CD4-positive, alpha-beta memory T cell (primary cell): ENCODE measurements at regions of chr2 and their contacts with region 1.

Region 1: DNA sequence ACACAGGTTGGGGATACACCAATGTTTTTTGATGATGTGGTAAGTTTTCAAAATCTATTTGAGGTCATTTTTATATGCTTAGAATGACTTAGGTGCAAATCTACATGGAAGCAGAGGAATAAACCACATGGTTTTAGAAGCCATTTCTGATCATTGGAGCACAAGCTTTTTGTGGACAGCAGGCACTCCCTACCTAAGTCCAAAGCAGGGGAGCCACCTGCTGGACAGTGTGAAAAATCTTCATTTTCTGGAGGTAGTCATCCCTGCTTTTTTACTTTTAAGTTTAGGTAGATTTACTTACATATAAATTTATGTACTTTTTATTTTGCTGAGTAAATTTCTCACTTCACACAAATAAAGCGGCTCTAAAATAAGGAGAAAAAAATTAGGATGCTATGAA is 323.2 kb downstream of the PLCL1 start:
- DNase-seq: peak in 4 of 5 donors; percentile 37 to 49 (median 42)
- H3K4me3 ChIP-seq: no peak overlapping the region
- H3K4me3 Mint-ChIP-seq: no peak overlapping the region
- H3K27ac ChIP-seq: no peak overlapping the region
- H3K27ac Mint-ChIP-seq: no peak overlapping the region
- H3K4me1 ChIP-seq: no peaks in the 10 kb centered on the region
- H3K4me1 Mint-ChIP-seq: peaks cover 0 to 1% (median under 1%) of the 10 kb centered on the region in 4 donors
- H3K27me3 ChIP-seq: no peaks in the 10 kb centered on the region
- H3K27me3 Mint-ChIP-seq: peaks cover 0 to 1% of the 10 kb centered on the region in 2 donors

Region 2: GRCh38 chr2:197799068-197799467 is 328.6 kb before region 1 on chr2:
- CTCF ChIA-PET with region 1: interaction called, 29 read pairs
- POLR2A ChIA-PET with region 1: interaction called, 3 read pairs
- intact Hi-C with region 1: loop called (anchors 1 kb)
- DNase-seq: no peak
- H3K4me3 ChIP-seq: no peak overlapping the region
- H3K4me3 Mint-ChIP-seq: no peak overlapping the region
- H3K27ac ChIP-seq: no peak overlapping the region
- H3K27ac Mint-ChIP-seq: no peak overlapping the region
- H3K4me1 ChIP-seq: peaks cover 10% of the 10 kb centered on the region
- H3K4me1 Mint-ChIP-seq: peaks cover 5 to 11% (median 9%) of the 10 kb centered on the region in 4 donors
- H3K27me3 ChIP-seq: no peaks in the 10 kb centered on the region
- H3K27me3 Mint-ChIP-seq: peaks cover 1 to 9% of the 10 kb centered on the region in 2 donors

Region 3: GRCh38 chr2:197975931-197976519 is 151.6 kb before region 1 on chr2:
- CTCF ChIA-PET with region 1: no interaction called
- POLR2A ChIA-PET with region 1: no interaction called
- intact Hi-C with region 1: no loop called
- DNase-seq: no peak
- H3K4me3 ChIP-seq: no peak overlapping the region
- H3K4me3 Mint-ChIP-seq: no peak overlapping the region
- H3K27ac ChIP-seq: no peak overlapping the region
- H3K27ac Mint-ChIP-seq: no peak overlapping the region
- H3K4me1 ChIP-seq: no peaks in the 10 kb centered on the region
- H3K4me1 Mint-ChIP-seq: peaks cover 0 to 11% (median 9%) of the 10 kb centered on the region in 4 donors
- H3K27me3 ChIP-seq: no peaks in the 10 kb centered on the region
- H3K27me3 Mint-ChIP-seq: no peaks in the 10 kb centered on the region

Region 4: GRCh38 chr2:198004921-198005829 is 122.5 kb before region 1 on chr2:
- CTCF ChIA-PET with region 1: no interaction called
- POLR2A ChIA-PET with region 1: no interaction called
- intact Hi-C with region 1: loop called (anchors 5 kb)
- DNase-seq: peak; percentile 12 to 55 (median 31)
- H3K4me3 ChIP-seq: no peak overlapping the region
- H3K4me3 Mint-ChIP-seq: peak overlapping the region; percentile 70 to 86 (median 80)
- H3K27ac ChIP-seq: peak overlapping the region; percentile 30
- H3K27ac Mint-ChIP-seq: peak overlapping the region; percentile 71 to 93 (median 90)
- H3K4me1 ChIP-seq: peaks cover 36% of the 10 kb centered on the region
- H3K4me1 Mint-ChIP-seq: peaks cover 30 to 50% (median 44%) of the 10 kb centered on the region in 4 donors
- H3K27me3 ChIP-seq: no peaks in the 10 kb centered on the region
- H3K27me3 Mint-ChIP-seq: no peaks in the 10 kb centered on the region

Region 5: GRCh38 chr2:198116756-198117155 is 10.9 kb before region 1 on chr2:
- CTCF ChIA-PET with region 1: interaction called, 15 read pairs
- POLR2A ChIA-PET with region 1: no interaction called
- intact Hi-C with region 1: no loop called
- DNase-seq: no peak
- H3K4me3 ChIP-seq: no peak overlapping the region
- H3K4me3 Mint-ChIP-seq: no peak overlapping the region
- H3K27ac ChIP-seq: no peak overlapping the region
- H3K27ac Mint-ChIP-seq: no peak overlapping the region
- H3K4me1 ChIP-seq: no peaks in the 10 kb centered on the region
- H3K4me1 Mint-ChIP-seq: peaks cover 0 to 4% (median 1%) of the 10 kb centered on the region in 4 donors
- H3K27me3 ChIP-seq: no peaks in the 10 kb centered on the region
- H3K27me3 Mint-ChIP-seq: no peaks in the 10 kb centered on the region